Right ventricle myocardium superior (tissue), 1 donor: ENCODE measurements at regions of chr9 and their contacts with region 1.

Region 1: DNA sequence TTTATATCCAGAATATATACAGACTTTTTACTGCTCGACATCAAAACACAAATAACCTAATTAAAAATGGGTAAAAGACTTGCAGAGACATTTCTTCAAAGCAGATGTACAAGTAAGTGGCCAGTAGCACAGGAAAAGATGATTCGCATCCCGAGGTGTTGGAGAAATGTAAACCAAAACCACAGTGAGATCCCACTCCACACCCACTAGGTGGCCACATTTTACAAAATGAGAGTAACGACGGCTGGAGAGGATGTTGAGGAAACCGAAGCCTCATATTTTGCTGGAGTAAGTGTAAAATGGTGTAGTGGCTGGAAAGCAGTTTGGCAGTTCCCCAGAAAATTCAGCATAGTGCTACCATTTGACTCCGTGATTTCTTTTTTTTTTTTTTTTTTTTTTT is 21.2 kb upstream of the GBGT1 start:
- DNase-seq: no peak
- ATAC-seq: peak; percentile 89

Region 2: GRCh38 chr9:133252301-133252780 is 67.4 kb after region 1 on chr9:
- intact Hi-C with region 1: no loop called
- DNase-seq: no peak
- ATAC-seq: peak; percentile 59

Region 3: DNA sequence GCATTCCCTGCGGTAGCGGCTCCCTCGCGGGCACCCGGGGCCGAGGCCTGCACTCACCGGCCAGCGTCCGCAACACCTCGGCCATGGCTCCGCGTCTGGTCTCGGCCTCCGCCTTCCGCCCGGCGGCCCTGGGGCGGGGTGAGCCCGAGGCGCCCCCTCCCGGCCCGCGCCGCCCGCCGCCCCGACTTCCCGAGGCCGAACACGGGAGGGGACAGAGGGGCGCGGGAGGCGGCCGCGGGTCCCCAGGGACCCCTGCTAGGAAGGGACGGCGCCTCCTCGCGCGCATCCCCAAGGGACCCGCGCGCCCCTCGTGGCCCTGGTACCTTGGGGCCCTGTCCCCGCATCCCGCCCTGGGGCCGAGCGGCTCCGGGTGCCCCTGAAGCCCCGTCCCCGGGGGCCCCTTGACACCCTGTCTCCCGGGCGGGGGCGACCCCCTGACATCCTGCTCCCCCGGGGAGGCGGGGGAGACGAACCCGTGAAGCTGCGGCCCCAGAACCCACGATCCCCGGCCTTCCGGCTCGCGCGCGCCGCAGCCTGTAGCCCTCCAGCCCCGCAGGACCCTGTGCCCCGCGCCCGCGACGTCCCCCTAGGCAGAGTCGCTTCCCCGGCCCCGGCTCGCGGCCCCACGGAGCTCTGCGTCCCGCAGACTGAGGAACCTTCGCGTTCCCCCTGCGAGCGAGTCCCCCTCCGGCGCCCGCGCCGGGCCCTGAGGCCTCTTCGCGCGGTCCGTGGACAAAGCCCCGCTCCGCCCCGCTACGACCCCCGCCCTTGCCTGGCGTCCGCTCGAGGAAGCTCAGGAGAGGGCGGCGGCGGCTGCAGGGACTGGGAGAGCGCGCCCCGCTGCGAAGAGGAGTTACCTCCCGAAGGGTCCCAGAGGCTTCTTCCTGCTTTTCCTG is 90.4 kb after region 1 on chr9 and contains the start of gene ABO:
- intact Hi-C with region 1: loop called (anchors 10 kb)
- DNase-seq: peak; percentile 51
- ATAC-seq: peak; percentile 87
- total RNA-seq, gene ABO: 2.4 TPM

Region 4: GRCh38 chr9:133334161-133334560 is 149.2 kb after region 1 on chr9:
- intact Hi-C with region 1: loop called (anchors 5 kb)
- DNase-seq: no peak
- ATAC-seq: no peak

Region 5: DNA sequence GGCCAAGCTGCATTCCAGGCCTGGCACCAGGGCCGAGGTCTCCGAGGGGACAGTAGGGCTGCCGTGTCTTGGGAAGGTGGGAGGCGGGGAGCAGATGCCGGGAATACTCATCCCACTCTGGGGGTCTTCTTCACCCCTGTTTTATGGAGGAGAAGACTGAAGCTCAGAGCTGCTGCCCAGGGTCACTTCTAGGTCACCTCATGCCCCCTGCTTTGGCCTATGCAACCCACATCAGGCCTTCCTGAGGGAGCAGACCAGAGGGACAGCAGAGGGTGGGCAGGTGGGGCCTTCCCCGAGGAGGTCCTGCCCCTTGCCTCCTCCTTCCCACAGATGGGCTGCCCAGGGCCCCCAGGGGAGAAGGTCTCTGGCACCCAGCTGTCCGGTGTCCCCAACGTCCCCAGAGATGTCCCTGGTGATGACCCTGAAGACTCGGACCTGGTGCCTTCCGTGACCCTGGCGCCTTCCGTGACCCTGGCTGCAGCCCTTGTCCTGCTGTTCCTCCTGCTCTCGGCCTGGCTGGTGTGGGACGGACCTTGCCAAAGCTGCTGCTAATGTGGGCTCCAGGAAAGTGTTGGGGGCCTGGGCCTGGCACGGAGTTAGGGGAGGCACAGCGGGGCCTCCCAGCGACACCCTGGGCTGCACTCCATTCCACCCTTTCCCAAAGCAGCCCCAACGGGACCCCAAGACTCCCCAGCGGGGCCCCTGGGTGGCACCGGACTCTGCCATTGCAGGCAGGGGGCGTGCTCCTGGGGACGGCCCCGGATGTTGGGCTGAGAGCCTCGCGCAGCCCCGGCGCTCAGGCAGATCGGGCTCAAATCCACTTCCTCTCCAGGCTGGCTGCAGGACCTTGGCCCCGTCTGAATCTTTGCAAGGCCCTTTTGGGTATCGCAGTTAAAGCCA is 300.6 kb after region 1 on chr9:
- intact Hi-C with region 1: loop called (anchors 5 kb)
- DNase-seq: peak; percentile 26
- ATAC-seq: no peak

Region 6: DNA sequence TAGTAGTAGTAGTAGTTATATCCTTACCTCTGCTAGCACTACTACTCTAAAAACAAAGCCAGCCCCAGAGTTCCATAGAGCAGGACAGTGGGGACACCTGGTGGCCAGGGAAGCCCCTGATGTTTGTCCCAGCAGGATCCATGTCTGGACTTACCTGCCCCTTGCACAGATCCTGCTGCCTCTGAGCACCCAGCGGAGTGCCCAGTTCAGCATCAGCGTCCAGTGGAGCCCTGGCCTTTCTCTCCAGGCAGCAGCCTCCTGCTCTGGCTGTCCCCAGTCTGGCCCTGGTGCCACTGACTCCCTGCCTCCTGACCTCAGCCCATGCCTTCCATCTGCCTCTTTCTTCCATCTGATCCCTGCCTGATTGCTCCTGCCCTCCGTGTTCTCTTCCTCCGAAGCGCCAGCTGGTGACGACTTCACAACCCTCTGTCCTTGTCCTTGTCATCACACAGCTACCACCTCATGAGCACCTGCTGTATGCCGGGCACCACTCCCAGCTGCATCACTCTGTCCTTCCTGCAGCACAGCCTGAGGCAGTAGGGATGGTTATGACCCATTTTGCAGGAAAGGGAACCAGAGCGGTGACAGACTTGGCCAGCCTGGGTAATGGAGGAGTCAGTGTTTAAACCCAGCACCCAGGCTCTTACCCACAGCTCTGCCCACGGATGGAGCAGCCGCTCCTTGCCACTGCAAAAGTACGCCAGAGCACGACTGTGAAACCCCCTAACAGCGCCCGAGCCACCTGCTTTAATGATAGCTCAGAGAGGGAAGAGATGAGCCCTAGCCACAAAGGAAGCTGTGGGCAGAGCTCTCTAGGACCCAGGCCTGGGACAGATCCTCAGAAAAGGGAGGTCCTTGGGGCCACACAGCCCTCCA is 541.7 kb after region 1 on chr9:
- intact Hi-C with region 1: loop called (anchors 10 kb)
- DNase-seq: peak; percentile 79
- ATAC-seq: peak; percentile 87